Calu3 (cell line): ENCODE measurements at regions of chr1 and their contacts with region 1.

Region 1: DNA sequence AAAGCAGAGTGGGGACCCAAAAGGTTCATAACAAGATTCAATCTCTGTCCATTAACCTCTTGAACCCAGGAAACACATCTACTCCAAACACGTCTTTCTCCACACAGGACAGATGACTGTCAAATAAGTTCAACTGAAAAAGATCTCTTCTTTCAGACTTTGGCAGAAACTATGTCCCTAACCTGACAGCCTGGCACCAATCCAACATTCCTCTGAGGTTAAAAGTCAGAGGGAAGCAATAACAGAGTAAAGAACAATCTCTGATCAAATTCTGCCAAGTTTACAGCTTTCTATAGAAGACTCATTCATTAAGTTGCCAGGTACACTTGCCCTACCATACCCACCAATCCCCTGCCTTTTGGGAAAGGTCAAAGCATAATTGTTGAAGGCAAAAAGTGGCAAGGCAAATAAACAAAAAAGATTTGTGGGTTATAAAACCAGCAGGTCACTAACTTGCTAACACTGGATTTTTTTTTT is 31.9 kb downstream of the OTUD7B start:
- DNase-seq: peak; percentile 57
- H3K4me3 Mint-ChIP-seq: no peak overlapping the region
- H3K27ac Mint-ChIP-seq: no peak overlapping the region
- H3K4me1 Mint-ChIP-seq: peaks cover 19% of the 10 kb centered on the region
- H3K27me3 Mint-ChIP-seq: no peaks in the 10 kb centered on the region
- CTCF ChIP-seq: no peak

Region 2: DNA sequence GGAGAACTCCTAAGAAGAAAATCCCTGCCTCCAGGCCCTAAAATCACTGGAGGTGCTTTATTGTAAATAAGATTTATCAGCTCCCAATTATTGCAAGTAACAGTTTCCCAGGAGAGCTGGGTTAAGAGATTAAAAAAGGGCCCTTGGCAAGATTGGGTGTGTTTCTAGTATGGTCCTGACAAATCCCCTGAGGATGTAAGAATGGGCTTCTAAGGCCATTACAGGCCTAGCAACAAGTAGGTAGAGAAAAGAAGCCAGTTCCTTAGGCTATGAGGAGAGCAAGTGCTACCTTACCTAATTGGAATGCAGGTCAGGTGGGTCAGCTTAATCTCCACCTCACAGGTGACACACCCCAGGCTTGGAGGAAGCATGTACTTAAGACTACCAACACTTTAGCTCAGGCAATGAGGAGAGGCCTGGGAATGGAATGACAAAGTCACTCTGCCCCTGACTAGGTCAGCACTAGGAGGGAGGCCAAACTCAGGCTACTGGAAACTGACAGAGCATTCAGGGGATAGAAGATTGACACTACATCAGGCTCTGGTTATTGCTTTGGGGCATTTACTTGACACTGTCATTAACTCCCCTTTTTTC is 38.7 kb after region 1 on chr1:
- CTCF ChIA-PET with region 1: no interaction called
- intact Hi-C with region 1: loop called (anchors 5 kb)
- DNase-seq: peak; percentile 72
- H3K4me3 Mint-ChIP-seq: no peak overlapping the region
- H3K27ac Mint-ChIP-seq: no peak overlapping the region
- H3K4me1 Mint-ChIP-seq: peaks cover 60% of the 10 kb centered on the region
- H3K27me3 Mint-ChIP-seq: no peaks in the 10 kb centered on the region
- CTCF ChIP-seq: no peak

Region 3: GRCh38 chr1:150067184-150068036 is 88.8 kb after region 1 on chr1 and contains the start of gene VPS45:
- CTCF ChIA-PET with region 1: no interaction called
- intact Hi-C with region 1: no loop called
- DNase-seq: peak; percentile 93
- H3K4me3 Mint-ChIP-seq: peak within 1 kb of the TSS; percentile 86
- H3K27ac Mint-ChIP-seq: peak within 1 kb of the TSS; percentile 69
- H3K4me1 Mint-ChIP-seq: peaks cover 27% of the 10 kb centered on the region
- H3K27me3 Mint-ChIP-seq: no peaks in the 10 kb centered on the region
- CTCF ChIP-seq: no peak
- total RNA-seq, gene VPS45: 35.0 and 37.9 TPM in 2 replicates